ENCODE measurements at regions of chr11 and their contacts with region 1.

Region 1: GRCh38 chr11:124108156-124108555 is 7.1 kb upstream of the VWA5A start:
- DNase-seq: peak; percentile 25
- H3K4me3 Mint-ChIP-seq: no peak overlapping the region
- H3K27ac Mint-ChIP-seq: no peak overlapping the region
- H3K4me1 Mint-ChIP-seq: no peaks in the 10 kb centered on the region
- H3K27me3 Mint-ChIP-seq: peaks cover 15% of the 10 kb centered on the region

Region 2: DNA sequence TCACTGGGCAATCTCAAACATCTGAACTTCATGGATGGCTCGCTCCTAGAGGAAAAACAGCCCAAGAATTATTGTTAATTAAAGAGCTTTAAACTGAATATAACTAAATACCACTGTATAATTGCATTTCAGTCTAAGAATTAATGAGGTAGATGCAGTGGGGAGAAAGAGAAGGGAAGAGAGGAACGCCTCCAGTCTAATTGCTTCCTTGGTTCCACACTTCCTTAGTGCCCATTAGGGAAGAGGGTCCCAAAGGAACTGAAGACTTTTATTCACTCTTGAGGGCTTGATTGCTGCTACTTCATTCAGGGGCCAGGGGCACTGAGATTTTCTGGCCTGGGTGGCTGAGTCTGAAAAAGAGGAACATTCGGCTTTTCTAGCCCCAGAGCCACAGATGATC is 55.2 kb before region 1 on chr11:
- CTCF ChIA-PET with region 1: no interaction called
- POLR2A ChIA-PET with region 1: no interaction called
- intact Hi-C with region 1: no loop called
- DNase-seq: no peak
- H3K4me3 Mint-ChIP-seq: no peak overlapping the region
- H3K27ac Mint-ChIP-seq: no peak overlapping the region
- H3K4me1 Mint-ChIP-seq: no peaks in the 10 kb centered on the region
- H3K27me3 Mint-ChIP-seq: peaks cover 4% of the 10 kb centered on the region

Region 3: DNA sequence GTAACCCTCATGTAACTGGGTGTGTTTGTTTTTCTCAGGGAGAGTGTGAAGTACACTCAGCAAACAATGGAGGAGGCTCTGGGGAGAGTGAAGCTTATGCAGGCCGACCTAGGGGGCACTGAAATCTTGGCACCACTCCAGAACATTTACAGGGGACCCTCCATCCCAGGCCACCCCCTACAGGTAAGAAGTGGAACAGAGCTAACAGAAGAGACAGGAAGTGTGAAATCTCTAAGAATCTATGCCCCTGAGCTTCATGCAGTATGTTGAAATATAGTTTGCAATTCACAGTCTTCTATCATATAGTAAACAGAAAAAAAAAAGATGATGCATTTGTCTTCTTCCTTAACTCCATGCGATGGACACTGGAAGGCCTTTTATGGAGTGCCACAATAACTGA is 15.5 kb after region 1 on chr11:
- CTCF ChIA-PET with region 1: no interaction called
- POLR2A ChIA-PET with region 1: no interaction called
- intact Hi-C with region 1: no loop called
- DNase-seq: no peak
- H3K4me3 Mint-ChIP-seq: no peak overlapping the region
- H3K27ac Mint-ChIP-seq: no peak overlapping the region
- H3K4me1 Mint-ChIP-seq: no peaks in the 10 kb centered on the region
- H3K27me3 Mint-ChIP-seq: no peaks in the 10 kb centered on the region

Region 4: DNA sequence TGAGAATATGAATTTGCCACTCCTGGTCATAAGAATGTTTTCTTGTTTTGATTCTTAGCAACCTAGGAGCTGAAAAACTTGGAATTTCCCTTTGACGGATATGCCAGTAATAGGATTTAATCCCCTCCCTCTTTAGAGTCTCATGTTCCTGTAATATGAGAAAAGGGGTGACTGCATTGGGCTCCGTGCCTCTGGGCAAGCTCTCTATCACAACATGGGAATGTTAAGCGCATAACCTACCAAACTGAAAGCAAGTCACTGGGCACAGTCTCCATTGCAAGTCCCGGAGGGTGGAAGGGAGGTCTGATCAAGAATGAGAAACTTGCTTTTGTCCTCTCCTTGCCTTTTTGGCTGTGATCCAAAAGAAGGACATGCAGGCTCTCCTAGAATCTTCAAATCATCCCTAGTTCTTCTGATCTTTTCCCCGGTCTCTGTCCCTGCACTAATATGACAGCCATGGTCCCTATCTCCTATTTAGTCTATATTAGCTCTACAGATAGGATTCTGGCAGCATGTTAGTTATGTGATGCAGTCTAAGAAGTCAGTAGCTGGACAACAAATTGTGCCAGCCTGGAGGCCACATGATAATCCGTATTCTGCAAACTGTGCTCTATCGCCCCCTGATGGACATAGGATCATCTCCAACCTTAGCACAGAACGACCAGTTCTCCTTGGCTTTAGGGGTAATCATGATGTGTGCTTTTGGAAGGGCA is 86.7 kb after region 1 on chr11:
- CTCF ChIA-PET with region 1: interaction called, 4 read pairs
- POLR2A ChIA-PET with region 1: no interaction called
- intact Hi-C with region 1: loop called (anchors 1 kb)
- DNase-seq: peak; percentile 58
- H3K4me3 Mint-ChIP-seq: no peak overlapping the region
- H3K27ac Mint-ChIP-seq: no peak overlapping the region
- H3K4me1 Mint-ChIP-seq: no peaks in the 10 kb centered on the region
- H3K27me3 Mint-ChIP-seq: peaks cover 10% of the 10 kb centered on the region

Measured in activated CD4-positive, alpha-beta memory T cell treated with anti-CD3 and anti-CD28 coated beads for 36 hours (primary cell).